Breast epithelium (tissue), 4 donors: ENCODE measurements at regions of chr4 and their contacts with region 1.

Region 1: GRCh38 chr4:152099555-152099954 is 338.7 kb upstream of the GATB start:
- DNase-seq: no peak
- H3K4me3 ChIP-seq: no peak overlapping the region
- H3K27ac ChIP-seq: peak overlapping the region in 1 of 2 donors; percentile 19
- H3K4me1 ChIP-seq: no peaks in the 10 kb centered on the region
- H3K27me3 ChIP-seq: no peaks in the 10 kb centered on the region
- CTCF ChIP-seq: no peak
- POLR2A ChIP-seq: no peak

Region 2: GRCh38 chr4:151760712-151761527 is 338.6 kb before region 1 on chr4 and contains the start of gene GATB:
- intact Hi-C with region 1: no loop called
- DNase-seq: peak; percentile 86 to 92
- H3K4me3 ChIP-seq: peak within 1 kb of the TSS; percentile 64 to 93 (median 81)
- H3K27ac ChIP-seq: peak within 1 kb of the TSS; percentile 71 to 84
- H3K4me1 ChIP-seq: peaks cover 0 to 7% of the 10 kb centered on the region in 2 donors
- H3K27me3 ChIP-seq: no peaks in the 10 kb centered on the region
- CTCF ChIP-seq: no peak
- POLR2A ChIP-seq: peak; percentile 39
- total RNA-seq, gene GATB: 12.8 to 26.6 (median 20.6) TPM

Region 3: GRCh38 chr4:152126238-152126637 is 26.7 kb after region 1 on chr4:
- intact Hi-C with region 1: loop called (anchors 1 kb)
- DNase-seq: no peak
- H3K4me3 ChIP-seq: no peak overlapping the region
- H3K27ac ChIP-seq: no peak overlapping the region
- H3K4me1 ChIP-seq: no peaks in the 10 kb centered on the region
- H3K27me3 ChIP-seq: no peaks in the 10 kb centered on the region
- CTCF ChIP-seq: no peak
- POLR2A ChIP-seq: no peak